Heart right ventricle (tissue), 16 donors: ENCODE measurements at regions of chr12 and their contacts with region 1.

Region 1: DNA sequence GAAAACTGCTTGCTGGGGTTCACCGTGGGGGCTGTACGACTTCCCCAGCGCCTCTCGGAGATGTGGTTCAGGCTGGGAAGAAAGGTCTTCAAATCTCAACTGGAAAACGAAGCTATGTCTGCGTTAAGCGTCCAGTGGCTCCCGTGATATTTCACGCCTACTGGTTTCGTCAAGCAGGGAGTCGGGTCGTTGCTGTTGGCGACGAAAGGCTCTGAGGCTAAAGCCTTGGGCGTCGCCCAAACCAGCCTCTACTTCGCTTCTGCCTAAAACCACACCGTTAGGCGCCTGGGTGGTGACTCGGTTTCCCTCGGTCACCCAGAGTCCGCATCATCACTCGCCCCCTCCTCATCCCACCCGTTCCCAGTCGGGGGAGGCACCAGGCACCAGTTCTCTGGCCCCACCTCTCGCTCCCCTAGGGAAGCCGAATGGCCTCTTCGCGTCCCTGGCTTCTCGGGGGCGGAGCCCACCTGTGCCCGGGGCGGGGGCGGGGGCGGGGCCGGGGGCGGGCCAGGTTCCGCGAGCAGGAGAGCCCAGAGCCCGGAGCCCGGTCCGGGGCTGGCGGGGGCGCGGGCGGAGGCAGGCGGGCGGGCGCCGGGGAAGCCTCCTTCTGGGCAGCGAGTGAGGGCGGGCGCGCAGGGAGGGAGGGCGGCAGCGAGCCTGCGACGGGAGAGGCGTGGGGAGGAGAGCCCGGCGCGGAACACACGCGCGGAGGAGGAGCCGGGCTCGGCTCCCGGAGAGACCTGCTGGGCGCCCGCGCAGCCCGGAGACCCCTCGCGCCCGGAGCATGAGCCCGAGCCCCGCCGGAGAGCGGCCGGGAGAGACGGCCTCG is at the start of gene B4GALNT3:
- DNase-seq: peak; percentile 24 to 61
- ATAC-seq: peak; percentile 44 to 74 (median 64)
- H3K4me3 ChIP-seq: peak within 1 kb of the TSS; percentile 47 to 67 (median 62)
- H3K27ac ChIP-seq: peak within 1 kb of the TSS in 9 of 10 donors; percentile 50 to 88 (median 81)
- H3K4me1 ChIP-seq: peaks cover 0 to 66% (median 20%) of the 10 kb centered on the region in 9 donors
- H3K27me3 ChIP-seq: peaks cover 0 to 75% (median 20%) of the 10 kb centered on the region in 7 donors
- CTCF ChIP-seq: no peak
- total RNA-seq, gene B4GALNT3: 19.6 to 53.5 (median 36.5) TPM

Region 2: GRCh38 chr12:538731-539539 is 79.3 kb after region 1 on chr12:
- intact Hi-C with region 1: loop called in 1 of 10 experiments (anchors 2 kb)
- DNase-seq: peak; percentile 55 to 75
- ATAC-seq: peak in 7 of 8 donors; percentile 54 to 78 (median 65)
- H3K4me3 ChIP-seq: no peak overlapping the region
- H3K27ac ChIP-seq: peak overlapping the region in 1 of 10 donors; percentile 29
- H3K4me1 ChIP-seq: peaks cover 7 to 42% (median 25%) of the 10 kb centered on the region in 9 donors
- H3K27me3 ChIP-seq: no peaks in the 10 kb centered on the region
- CTCF ChIP-seq: no peak

Region 3: GRCh38 chr12:724194-724855 is 264.7 kb after region 1 on chr12:
- intact Hi-C with region 1: no loop called
- DNase-seq: no peak
- ATAC-seq: peak in 5 of 8 donors; percentile 26 to 60 (median 49)
- H3K4me3 ChIP-seq: no peak overlapping the region
- H3K27ac ChIP-seq: peak overlapping the region in 1 of 10 donors; percentile 66
- H3K4me1 ChIP-seq: peaks cover 0 to 36% (median 0%) of the 10 kb centered on the region in 9 donors
- H3K27me3 ChIP-seq: no peaks in the 10 kb centered on the region
- CTCF ChIP-seq: no peak